ENCODE measurements at regions of chr9 and their contacts with region 1.

Region 1: DNA sequence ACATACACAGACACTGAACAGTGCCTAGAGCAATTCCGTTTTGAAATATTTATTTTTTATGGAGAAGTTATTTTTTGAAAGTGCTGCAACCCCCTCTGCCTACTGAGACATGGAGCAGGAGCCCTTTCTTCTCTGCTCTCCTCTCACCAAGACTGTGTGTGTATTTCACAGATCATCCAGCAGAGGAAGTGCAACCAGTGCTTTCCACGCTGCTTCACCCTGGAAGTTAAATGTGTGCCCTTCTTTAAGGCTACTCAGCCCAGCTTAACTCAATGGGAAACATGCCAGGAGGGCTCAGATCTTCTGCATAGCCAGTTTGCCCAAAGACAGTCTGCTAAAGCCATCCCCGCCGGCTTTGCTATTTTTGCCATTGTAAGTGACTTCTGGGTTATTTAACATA is 606.3 kb downstream of the TLE1 start:
- DNase-seq: no peak
- ATAC-seq: no peak
- H3K4me3 ChIP-seq: no peak overlapping the region
- H3K27ac ChIP-seq: no peak overlapping the region
- H3K4me1 ChIP-seq: no peaks in the 10 kb centered on the region
- H3K27me3 ChIP-seq: no peaks in the 10 kb centered on the region
- CTCF ChIP-seq: no peak

Region 2: GRCh38 chr9:81113456-81114124 is 30.5 kb after region 1 on chr9:
- intact Hi-C with region 1: no loop called
- DNase-seq: no peak
- ATAC-seq: no peak
- H3K4me3 ChIP-seq: no peak overlapping the region
- H3K27ac ChIP-seq: no peak overlapping the region
- H3K4me1 ChIP-seq: no peaks in the 10 kb centered on the region
- H3K27me3 ChIP-seq: no peaks in the 10 kb centered on the region
- CTCF ChIP-seq: no peak

Region 3: GRCh38 chr9:81125446-81126092 is 42.5 kb after region 1 on chr9:
- intact Hi-C with region 1: loop called in 1 of 2 experiments (anchors 2 kb)
- DNase-seq: no peak
- ATAC-seq: no peak
- H3K4me3 ChIP-seq: no peak overlapping the region
- H3K27ac ChIP-seq: no peak overlapping the region
- H3K4me1 ChIP-seq: no peaks in the 10 kb centered on the region
- H3K27me3 ChIP-seq: peaks cover 0 to 1% (median 0%) of the 10 kb centered on the region in 3 donors
- CTCF ChIP-seq: no peak